Activated T-helper 1 cell treated with anti-CD3 and anti-CD28 coated beads, Interleukin-12 subunit alpha, Interleukin-12 subunit beta, Interleukin-2, Interleukin-4 antibody, amounts not matched to agents 30 ng/mL and 10 ng/mL and 1 ng/mL, durations not matched to agents 14 hours and 24 hours and 36 hours (primary cell): ENCODE measurements at regions of chr12 and their contacts with region 1.

Region 1: GRCh38 chr12:57430931-57431720 is at the start of gene R3HDM2:
- DNase-seq: peak; percentile 90
- H3K4me3 Mint-ChIP-seq: peak within 1 kb of the TSS; percentile 98
- H3K27ac Mint-ChIP-seq: peak within 1 kb of the TSS; percentile 99
- H3K4me1 Mint-ChIP-seq: peaks cover 34% of the 10 kb centered on the region
- H3K27me3 Mint-ChIP-seq: no peaks in the 10 kb centered on the region
- total RNA-seq, gene R3HDM2: 39.0 and 44.6 TPM in 2 replicates

Region 2: DNA sequence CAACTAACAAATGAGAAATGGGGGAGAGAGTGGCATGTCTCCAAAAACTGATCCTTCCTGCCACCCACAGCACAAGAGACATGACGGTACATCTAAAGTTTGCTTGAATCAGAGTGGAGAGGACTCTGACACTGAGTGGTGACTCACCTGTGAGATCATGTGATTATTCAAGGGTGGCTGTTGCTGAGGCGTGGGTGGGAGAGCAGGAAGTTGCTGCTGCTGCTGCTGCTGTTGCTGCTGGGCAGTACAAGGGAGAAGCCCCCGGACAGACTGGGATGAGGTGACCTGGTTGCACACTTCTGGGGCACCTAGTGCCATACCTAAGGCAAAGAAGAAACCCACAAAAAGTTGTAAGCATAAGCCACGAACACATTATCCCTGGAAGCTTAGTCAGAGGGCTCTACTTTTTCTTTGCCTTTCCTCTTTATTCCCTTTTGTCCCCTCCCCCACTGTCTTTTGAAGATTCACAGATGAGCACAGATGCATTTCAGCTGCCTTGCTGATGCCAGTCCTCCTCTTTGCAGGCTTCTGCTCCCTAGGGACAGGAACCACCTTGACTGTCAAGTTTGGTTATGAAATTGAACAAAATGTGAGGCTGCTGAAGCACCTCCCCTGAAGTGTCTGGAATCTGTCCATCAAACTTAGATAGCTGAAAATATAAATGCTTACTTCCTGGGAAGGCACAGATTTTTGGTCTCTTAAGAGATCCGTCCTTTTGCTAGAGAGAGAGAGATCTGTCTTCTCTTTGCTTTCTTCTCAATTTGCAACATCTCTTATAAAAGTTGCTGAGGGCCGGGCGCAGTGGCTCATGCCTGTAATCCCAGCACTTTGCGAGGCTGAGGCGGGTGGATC is 150.7 kb before region 1 on chr12:
- intact Hi-C with region 1: loop called (anchors 1 kb)
- DNase-seq: peak; percentile 69
- H3K4me3 Mint-ChIP-seq: peak overlapping the region; percentile 50
- H3K27ac Mint-ChIP-seq: peak overlapping the region; percentile 92
- H3K4me1 Mint-ChIP-seq: peaks cover 15% of the 10 kb centered on the region
- H3K27me3 Mint-ChIP-seq: no peaks in the 10 kb centered on the region

Region 3: GRCh38 chr12:57487597-57488401 is 56.7 kb after region 1 on chr12 and contains the start of gene MARS1:
- intact Hi-C with region 1: loop called (anchors 2 kb)
- DNase-seq: peak; percentile 91
- H3K4me3 Mint-ChIP-seq: peak within 1 kb of the TSS; percentile 97
- H3K27ac Mint-ChIP-seq: peak within 1 kb of the TSS; percentile 96
- H3K4me1 Mint-ChIP-seq: peaks cover 33% of the 10 kb centered on the region
- H3K27me3 Mint-ChIP-seq: no peaks in the 10 kb centered on the region
- total RNA-seq, gene MARS1: 283 and 318 TPM in 2 replicates